ENCODE measurements at regions of chr19 and their contacts with region 1.

Region 1: GRCh38 chr19:6460101-6460853 is 685 bp upstream of the SLC25A23 start:
- DNase-seq: peak; percentile 90
- ATAC-seq: peak; percentile 82
- H3K4me3 Mint-ChIP-seq: peak overlapping the region; percentile 90
- H3K27ac Mint-ChIP-seq: peak overlapping the region; percentile 79
- H3K4me1 Mint-ChIP-seq: peaks cover 42% of the 10 kb centered on the region
- H3K27me3 Mint-ChIP-seq: peaks cover 3% of the 10 kb centered on the region
- CTCF ChIP-seq: no peak

Region 2: DNA sequence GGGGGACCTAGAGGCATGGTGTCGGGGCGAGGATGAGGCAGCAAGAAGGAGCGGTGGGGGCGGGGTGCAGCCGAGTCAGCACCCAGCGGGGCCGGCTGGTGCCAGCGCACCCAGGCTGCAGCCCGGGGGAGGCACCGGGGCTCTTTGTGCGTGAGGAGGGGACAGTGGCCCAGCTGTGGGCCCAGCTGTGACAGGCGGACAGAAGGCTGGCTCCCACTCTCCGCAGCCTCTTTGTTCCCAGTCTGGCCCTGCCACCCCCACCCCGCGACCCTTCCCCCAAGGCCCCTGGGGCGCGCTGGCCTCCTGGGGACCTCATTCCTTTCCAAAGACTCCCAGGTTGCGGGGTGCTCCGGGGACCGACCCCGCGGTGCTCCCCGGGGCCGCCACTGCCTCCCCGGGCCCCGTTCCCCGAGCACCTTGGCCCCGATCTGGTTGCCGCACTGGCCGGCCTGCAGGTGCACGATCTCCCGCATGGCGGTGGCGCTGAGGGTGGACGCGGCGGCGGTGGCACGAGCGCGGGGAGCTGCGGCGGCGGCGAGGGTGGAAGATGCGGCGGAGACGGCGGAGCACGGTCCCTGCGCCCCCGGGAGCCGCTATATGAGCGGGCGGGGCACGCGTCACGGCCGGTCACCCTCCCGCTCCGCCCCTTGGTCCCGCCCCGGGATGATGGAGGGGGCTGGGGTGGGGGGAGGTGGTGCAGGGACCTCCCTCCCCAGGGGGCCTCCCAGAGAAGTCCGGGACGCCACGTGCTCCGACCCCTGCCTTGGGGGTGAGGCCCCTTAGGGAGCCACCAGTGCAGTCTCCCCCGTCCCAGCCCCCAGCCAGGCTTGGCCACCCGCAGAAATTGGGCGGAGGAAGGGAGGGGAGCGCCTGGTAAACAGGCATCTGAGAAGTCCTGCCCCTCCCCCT is 41.7 kb after region 1 on chr19 and contains the start of gene TUBB4A:
- CTCF ChIA-PET with region 1: no interaction called
- POLR2A ChIA-PET with region 1: interaction called, 5 read pairs
- intact Hi-C with region 1: loop called (anchors 1 kb)
- DNase-seq: peak; percentile 65
- ATAC-seq: peak; percentile 78
- H3K4me3 Mint-ChIP-seq: peak within 1 kb of the TSS; percentile 87
- H3K27ac Mint-ChIP-seq: no peak within 1 kb of the TSS
- H3K4me1 Mint-ChIP-seq: peaks cover 23% of the 10 kb centered on the region
- H3K27me3 Mint-ChIP-seq: peaks cover 4% of the 10 kb centered on the region
- CTCF ChIP-seq: no peak
- total RNA-seq, gene TUBB4A: 13.2 and 16.8 TPM in 2 replicates

Measured in activated B cell treated with CpG ODN at 0.5 μM for 24 hours (primary cell).